ENCODE measurements at regions of chr1 and their contacts with region 1.

Region 1: DNA sequence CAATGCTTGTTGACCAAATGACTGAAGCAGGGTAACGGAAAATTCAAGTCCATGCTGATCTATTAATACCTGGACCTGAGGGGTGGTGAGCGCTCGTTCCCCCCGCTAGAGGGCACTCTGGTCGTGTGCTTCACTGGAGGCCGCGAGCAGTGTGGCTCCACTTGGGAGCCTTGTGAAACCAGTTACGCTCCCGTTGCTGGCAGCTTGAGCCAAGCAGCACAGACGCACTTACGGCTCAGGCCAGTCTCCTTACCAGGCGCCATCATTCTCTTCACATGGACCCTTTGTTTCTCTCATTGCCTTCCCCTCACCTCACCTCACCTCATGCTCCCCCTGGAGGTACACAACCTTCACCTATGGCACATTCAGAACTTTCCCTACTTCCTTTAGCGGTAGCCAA is 49.7 kb upstream of the TSPAN2 start:
- H3K4me3 ChIP-seq: no peak overlapping the region
- H3K27ac ChIP-seq: no peak overlapping the region
- H3K4me1 ChIP-seq: no peaks in the 10 kb centered on the region
- CTCF ChIP-seq: peak; percentile 91

Region 2: DNA sequence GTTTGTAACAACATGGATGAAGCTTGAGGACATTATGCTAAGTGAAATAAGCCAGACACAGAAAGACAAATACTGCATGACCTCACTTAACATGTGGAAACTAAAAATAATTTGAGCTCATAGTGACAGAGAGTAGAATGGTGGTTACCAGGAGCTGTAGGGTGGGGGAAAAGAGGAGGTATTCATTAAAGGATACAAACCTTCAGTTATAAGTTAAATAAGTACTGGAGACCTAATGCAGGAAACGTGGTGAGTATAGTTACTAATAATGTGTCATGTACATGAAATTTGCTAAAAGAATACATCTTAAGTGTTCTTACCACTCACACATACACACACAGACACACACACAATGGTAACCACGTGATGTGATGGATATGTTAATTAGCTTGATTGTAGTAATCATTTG is 112.4 kb after region 1 on chr1:
- CTCF ChIA-PET with region 1: no interaction called
- POLR2A ChIA-PET with region 1: no interaction called
- H3K4me3 ChIP-seq: no peak overlapping the region
- H3K27ac ChIP-seq: no peak overlapping the region
- H3K4me1 ChIP-seq: no peaks in the 10 kb centered on the region
- CTCF ChIP-seq: no peak

Region 3: GRCh38 chr1:115506926-115507589 is 368.1 kb after region 1 on chr1:
- CTCF ChIA-PET with region 1: interaction called, 31 read pairs
- POLR2A ChIA-PET with region 1: no interaction called
- H3K4me3 ChIP-seq: no peak overlapping the region
- H3K27ac ChIP-seq: no peak overlapping the region
- H3K4me1 ChIP-seq: no peaks in the 10 kb centered on the region
- CTCF ChIP-seq: peak; percentile 78